CD8-positive, alpha-beta memory T cell (primary cell): ENCODE measurements at regions of chr19 and their contacts with region 1.

Region 1: GRCh38 chr19:11528551-11529341 is at the start of gene ECSIT:
- DNase-seq: peak; percentile 82 to 94 (median 89)
- H3K4me3 ChIP-seq: peak within 1 kb of the TSS; percentile 97
- H3K4me3 Mint-ChIP-seq: peak within 1 kb of the TSS; percentile 92 to 98 (median 97)
- H3K27ac ChIP-seq: peak within 1 kb of the TSS; percentile 60
- H3K27ac Mint-ChIP-seq: peak within 1 kb of the TSS; percentile 91 to 99 (median 96)
- H3K4me1 ChIP-seq: peaks cover 18% of the 10 kb centered on the region
- H3K4me1 Mint-ChIP-seq: peaks cover 17 to 28% (median 21%) of the 10 kb centered on the region in 3 donors
- H3K27me3 ChIP-seq: no peaks in the 10 kb centered on the region
- H3K27me3 Mint-ChIP-seq: no peaks in the 10 kb centered on the region
- total RNA-seq, gene ECSIT: 59.6 to 61.0 TPM

Region 2: GRCh38 chr19:11435058-11435832 is 93.5 kb before region 1 on chr19 and contains the starts of genes ODAD3 and PRKCSH:
- CTCF ChIA-PET with region 1: no interaction called
- POLR2A ChIA-PET with region 1: no interaction called
- DNase-seq: peak; percentile 93 to 99 (median 97)
- H3K4me3 ChIP-seq: peak within 1 kb of the TSS; percentile 95
- H3K4me3 Mint-ChIP-seq: peak within 1 kb of the TSS; percentile 92 to 100 (median 99)
- H3K27ac ChIP-seq: peak within 1 kb of the TSS; percentile 83
- H3K27ac Mint-ChIP-seq: peak within 1 kb of the TSS; percentile 91 to 99 (median 98)
- H3K4me1 ChIP-seq: peaks cover 19% of the 10 kb centered on the region
- H3K4me1 Mint-ChIP-seq: peaks cover 20 to 32% (median 26%) of the 10 kb centered on the region in 3 donors
- H3K27me3 ChIP-seq: no peaks in the 10 kb centered on the region
- H3K27me3 Mint-ChIP-seq: peaks cover 5 to 6% of the 10 kb centered on the region in 2 donors
- total RNA-seq, gene ODAD3: 0.11 to 0.24 TPM
- total RNA-seq, gene PRKCSH: 262 to 272 TPM

Region 3: DNA sequence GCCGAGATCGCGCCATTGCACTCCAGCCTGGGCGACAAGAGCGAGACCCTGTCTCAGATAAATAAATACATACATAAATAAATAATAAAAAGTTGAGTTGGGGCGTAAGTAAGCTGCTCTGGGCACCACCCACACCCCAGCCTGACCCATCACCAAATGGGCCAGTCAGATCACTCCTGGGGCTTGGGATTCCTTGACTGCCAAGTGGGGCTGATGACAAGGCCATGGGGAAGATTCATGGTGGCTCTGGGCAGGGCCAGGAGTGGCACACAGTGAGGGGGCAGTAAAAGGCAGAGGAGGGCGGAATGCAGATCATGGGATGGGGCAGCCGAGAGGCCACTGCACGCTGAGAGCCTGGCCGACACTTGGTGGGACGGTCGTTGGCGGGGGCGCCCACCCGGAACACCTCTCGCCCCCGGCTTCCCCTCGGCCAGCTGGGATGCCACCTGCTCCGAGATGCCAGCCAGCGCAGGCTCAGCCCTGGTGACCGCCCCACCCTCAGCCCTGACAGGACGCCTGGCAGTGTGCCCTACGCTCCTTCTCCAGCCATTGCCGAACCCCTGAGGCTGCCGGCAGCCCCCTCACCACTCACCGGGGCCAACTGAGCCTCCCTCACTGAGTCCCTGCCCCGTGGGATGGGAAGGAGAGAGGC is 34.0 kb before region 1 on chr19:
- CTCF ChIA-PET with region 1: no interaction called
- POLR2A ChIA-PET with region 1: no interaction called
- DNase-seq: no peak
- H3K4me3 ChIP-seq: no peak overlapping the region
- H3K4me3 Mint-ChIP-seq: no peak overlapping the region
- H3K27ac ChIP-seq: no peak overlapping the region
- H3K27ac Mint-ChIP-seq: peak overlapping the region in 2 of 8 donors; percentile 76 to 77
- H3K4me1 ChIP-seq: no peaks in the 10 kb centered on the region
- H3K4me1 Mint-ChIP-seq: peaks cover 0 to under 1% (median 0%) of the 10 kb centered on the region in 3 donors
- H3K27me3 ChIP-seq: no peaks in the 10 kb centered on the region
- H3K27me3 Mint-ChIP-seq: no peaks in the 10 kb centered on the region

Region 4: DNA sequence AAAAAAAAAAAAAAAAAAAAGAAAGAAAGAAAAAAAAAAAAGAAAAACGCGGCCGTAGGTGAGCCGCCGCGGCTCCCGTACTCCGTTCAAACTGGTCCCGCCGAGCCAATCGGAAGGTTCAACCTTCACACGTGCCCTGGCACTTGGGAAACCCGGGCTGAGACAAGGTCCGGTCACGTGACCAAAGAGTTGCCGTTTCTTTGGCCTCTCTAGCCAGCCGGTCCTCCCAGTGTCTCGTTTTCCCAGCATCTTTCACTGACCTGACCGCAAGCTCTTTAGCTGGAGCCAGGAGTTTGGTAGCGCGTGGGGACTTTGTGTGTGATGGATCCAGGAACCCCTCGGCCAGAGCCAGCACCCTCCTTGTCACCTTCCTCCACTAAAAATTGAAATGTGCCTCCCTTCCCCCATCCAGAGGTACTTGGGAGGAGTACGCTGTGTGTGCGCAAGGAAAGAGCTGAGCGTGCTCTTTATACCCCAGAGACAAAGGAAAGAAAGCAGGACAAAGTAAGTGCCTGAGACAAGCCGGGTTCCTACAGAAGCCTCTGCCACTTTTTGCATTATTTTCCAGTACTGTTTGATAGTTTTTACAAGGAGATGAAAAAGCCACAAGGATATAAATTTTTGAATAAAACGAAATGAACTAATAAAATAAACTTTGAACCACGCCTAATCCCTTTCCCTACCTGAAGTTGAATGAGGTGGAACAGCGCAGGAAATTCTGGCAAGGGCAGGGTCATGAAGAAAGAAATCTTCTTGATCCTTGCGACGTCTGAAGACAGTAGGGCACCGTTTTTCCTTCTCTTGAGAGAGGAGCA is 1194.0 kb after region 1 on chr19:
- CTCF ChIA-PET with region 1: no interaction called
- POLR2A ChIA-PET with region 1: interaction called, 18 read pairs
- DNase-seq: peak; percentile 90 to 97 (median 92)
- H3K4me3 ChIP-seq: peak overlapping the region; percentile 98
- H3K4me3 Mint-ChIP-seq: peak overlapping the region; percentile 90 to 95 (median 94)
- H3K27ac ChIP-seq: peak overlapping the region; percentile 60
- H3K27ac Mint-ChIP-seq: peak overlapping the region; percentile 85 to 96 (median 94)
- H3K4me1 ChIP-seq: peaks cover 17% of the 10 kb centered on the region
- H3K4me1 Mint-ChIP-seq: peaks cover 35 to 46% (median 38%) of the 10 kb centered on the region in 3 donors
- H3K27me3 ChIP-seq: no peaks in the 10 kb centered on the region
- H3K27me3 Mint-ChIP-seq: peaks cover 0 to 4% of the 10 kb centered on the region in 2 donors